B cell (primary cell): ENCODE measurements at regions of chr5 and their contacts with region 1.

Region 1: GRCh38 chr5:65624571-65625555 is at the starts of genes SHLD3 and TRAPPC13:
- DNase-seq: peak; percentile 96
- ATAC-seq: peak; percentile 76
- H3K4me3 ChIP-seq: peak within 1 kb of the TSS; percentile 88 to 99 (median 88)
- H3K4me3 Mint-ChIP-seq: peak within 1 kb of the TSS; percentile 99
- H3K27ac ChIP-seq: peak within 1 kb of the TSS; percentile 73 to 84
- H3K27ac Mint-ChIP-seq: peak within 1 kb of the TSS; percentile 98
- H3K4me1 ChIP-seq: peaks cover 16 to 21% of the 10 kb centered on the region in 2 donors
- H3K4me1 Mint-ChIP-seq: peaks cover 41% of the 10 kb centered on the region
- H3K27me3 ChIP-seq: no peaks in the 10 kb centered on the region
- H3K27me3 Mint-ChIP-seq: no peaks in the 10 kb centered on the region
- CTCF ChIP-seq: peak; percentile 18
- total RNA-seq, gene SHLD3: 6.3 and 6.7 TPM in 2 replicates
- total RNA-seq, gene TRAPPC13: 18.8 and 24.4 TPM in 2 replicates

Region 2: GRCh38 chr5:64768358-64769312 is 856.2 kb before region 1 on chr5 and contains the starts of genes CWC27 and SREK1IP1:
- CTCF ChIA-PET with region 1: no interaction called
- POLR2A ChIA-PET with region 1: no interaction called
- intact Hi-C with region 1: loop called (anchors 1 kb)
- DNase-seq: peak; percentile 92
- ATAC-seq: peak; percentile 94
- H3K4me3 ChIP-seq: peak within 1 kb of the TSS; percentile 81 to 99 (median 96)
- H3K4me3 Mint-ChIP-seq: peak within 1 kb of the TSS; percentile 99
- H3K27ac ChIP-seq: peak within 1 kb of the TSS; percentile 73 to 84
- H3K27ac Mint-ChIP-seq: peak within 1 kb of the TSS; percentile 96
- H3K4me1 ChIP-seq: peaks cover 30 to 37% of the 10 kb centered on the region in 2 donors
- H3K4me1 Mint-ChIP-seq: peaks cover 55% of the 10 kb centered on the region
- H3K27me3 ChIP-seq: no peaks in the 10 kb centered on the region
- H3K27me3 Mint-ChIP-seq: no peaks in the 10 kb centered on the region
- CTCF ChIP-seq: no peak
- total RNA-seq, gene CWC27: 27.5 and 30.5 TPM in 2 replicates
- total RNA-seq, gene SREK1IP1: 21.0 and 25.5 TPM in 2 replicates

Region 3: GRCh38 chr5:65663804-65664521 is 39.1 kb after region 1 on chr5:
- CTCF ChIA-PET with region 1: no interaction called
- POLR2A ChIA-PET with region 1: no interaction called
- intact Hi-C with region 1: no loop called
- DNase-seq: no peak
- ATAC-seq: no peak
- H3K4me3 ChIP-seq: no peak overlapping the region
- H3K4me3 Mint-ChIP-seq: no peak overlapping the region
- H3K27ac ChIP-seq: no peak overlapping the region
- H3K27ac Mint-ChIP-seq: no peak overlapping the region
- H3K4me1 ChIP-seq: no peaks in the 10 kb centered on the region
- H3K4me1 Mint-ChIP-seq: no peaks in the 10 kb centered on the region
- H3K27me3 ChIP-seq: no peaks in the 10 kb centered on the region
- H3K27me3 Mint-ChIP-seq: no peaks in the 10 kb centered on the region
- CTCF ChIP-seq: no peak

Region 4: GRCh38 chr5:66144074-66144833 is 519.4 kb after region 1 on chr5 and contains the start of gene SREK1:
- CTCF ChIA-PET with region 1: no interaction called
- POLR2A ChIA-PET with region 1: interaction called, 8 read pairs
- intact Hi-C with region 1: loop called (anchors 1 kb)
- DNase-seq: peak; percentile 93
- ATAC-seq: peak; percentile 84
- H3K4me3 ChIP-seq: peak within 1 kb of the TSS; percentile 76 to 99 (median 95)
- H3K4me3 Mint-ChIP-seq: peak within 1 kb of the TSS; percentile 96
- H3K27ac ChIP-seq: peak within 1 kb of the TSS; percentile 97 to 99
- H3K27ac Mint-ChIP-seq: peak within 1 kb of the TSS; percentile 100
- H3K4me1 ChIP-seq: peaks cover 9 to 16% of the 10 kb centered on the region in 2 donors
- H3K4me1 Mint-ChIP-seq: peaks cover 29% of the 10 kb centered on the region
- H3K27me3 ChIP-seq: no peaks in the 10 kb centered on the region
- H3K27me3 Mint-ChIP-seq: no peaks in the 10 kb centered on the region
- CTCF ChIP-seq: no peak
- total RNA-seq, gene SREK1: 116 and 117 TPM in 2 replicates